Stomach (tissue), 19 donors: ENCODE measurements at regions of chr22 and their contacts with region 1.

Region 1: GRCh38 chr22:40636380-40637182 is at the start of gene MRTFA:
- DNase-seq: peak; percentile 100
- H3K4me3 ChIP-seq: peak within 1 kb of the TSS; percentile 85 to 98 (median 94)
- H3K27ac ChIP-seq: peak within 1 kb of the TSS; percentile 92 to 99 (median 95)
- H3K4me1 ChIP-seq: peaks cover 4 to 51% (median 45%) of the 10 kb centered on the region in 4 donors
- H3K27me3 ChIP-seq: no peaks in the 10 kb centered on the region
- CTCF ChIP-seq: no peak
- EP300 ChIP-seq: no peak
- POLR2A ChIP-seq: peak in 2 of 4 donors; percentile 78 to 93
- total RNA-seq, gene MRTFA: 40.4 to 706 (median 99.8) TPM

Region 2: DNA sequence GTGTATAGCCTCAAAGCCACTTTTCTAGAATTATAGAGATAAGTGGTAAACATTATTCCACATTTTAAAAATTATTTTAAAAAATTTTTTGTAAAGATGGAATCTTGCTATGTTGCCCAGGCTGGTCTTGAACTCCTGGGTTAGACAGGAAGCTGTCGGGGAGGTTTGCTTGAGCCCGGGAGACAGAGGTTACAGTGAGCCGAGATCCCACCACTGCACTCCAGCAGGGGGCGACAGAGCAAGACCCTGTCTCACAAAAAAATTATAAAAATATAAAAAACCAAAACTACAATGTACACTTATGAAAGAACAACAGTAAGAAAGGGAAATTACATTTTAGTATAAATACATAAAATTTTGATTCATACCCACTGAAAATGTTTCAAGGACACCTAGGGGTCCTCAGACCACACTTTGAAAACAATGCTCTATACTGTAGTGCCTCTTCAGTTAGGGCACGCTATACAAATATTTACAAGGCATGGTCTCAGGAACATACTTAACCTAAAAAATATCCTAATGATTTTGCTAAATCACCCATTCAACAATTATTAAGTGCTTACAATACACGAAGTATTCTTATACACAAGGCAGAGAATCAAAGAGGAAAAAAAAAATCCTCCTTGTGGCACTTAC is 111.2 kb before region 1 on chr22:
- intact Hi-C with region 1: loop called (anchors 10 kb)
- DNase-seq: peak; percentile 48 to 74
- H3K4me3 ChIP-seq: no peak overlapping the region
- H3K27ac ChIP-seq: peak overlapping the region in 1 of 5 donors; percentile 20
- H3K4me1 ChIP-seq: peaks cover 7 to 48% (median 28%) of the 10 kb centered on the region in 4 donors
- H3K27me3 ChIP-seq: no peaks in the 10 kb centered on the region
- CTCF ChIP-seq: peak in 4 of 7 experiments; percentile 27 to 75 (median 56)
- EP300 ChIP-seq: no peak
- POLR2A ChIP-seq: no peak